OCI-LY7 (cell line): ENCODE measurements at regions of chr5 and their contacts with region 1.

Region 1: GRCh38 chr5:19584131-19584530 is 403.9 kb downstream of the CDH18 start:
- DNase-seq: no peak
- H3K4me3 ChIP-seq: no peak overlapping the region
- H3K27ac ChIP-seq: no peak overlapping the region
- H3K4me1 ChIP-seq: no peaks in the 10 kb centered on the region
- CTCF ChIP-seq: no peak

Region 2: DNA sequence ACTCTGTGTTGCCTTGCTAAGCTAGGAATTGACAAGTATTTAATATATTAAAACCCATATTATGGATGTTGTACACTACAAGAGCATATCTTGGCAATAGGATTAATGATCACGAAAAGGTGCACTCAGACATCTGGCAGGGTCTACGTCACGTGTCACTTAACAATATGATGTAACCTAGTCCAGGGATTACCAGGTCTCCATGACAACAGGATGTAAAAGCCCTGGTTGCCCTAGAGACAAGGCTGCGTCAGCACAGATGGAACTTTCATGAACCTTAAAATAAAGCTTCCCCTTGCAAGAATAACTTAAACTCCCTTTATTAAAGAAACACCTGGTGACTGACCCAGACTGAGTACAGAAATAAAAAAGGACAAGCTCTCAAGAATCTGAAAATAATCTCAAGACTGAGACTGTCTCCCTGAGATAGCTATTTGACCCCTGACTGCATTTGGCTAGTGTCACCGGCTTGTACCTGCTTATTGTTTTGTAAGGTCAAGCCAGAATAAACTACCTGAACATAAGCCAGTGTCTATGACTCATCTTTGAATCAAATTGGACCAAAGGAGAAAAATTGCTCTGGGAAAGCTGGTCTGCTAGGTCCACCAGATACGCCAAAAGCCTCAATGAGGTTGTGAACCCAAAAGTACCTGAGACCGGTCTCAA is 313.8 kb before region 1 on chr5:
- CTCF ChIA-PET with region 1: no interaction called
- POLR2A ChIA-PET with region 1: no interaction called
- intact Hi-C with region 1: loop called (anchors 10 kb)
- DNase-seq: peak; percentile 99
- H3K4me3 ChIP-seq: peak overlapping the region; percentile 34
- H3K27ac ChIP-seq: peak overlapping the region; percentile 100
- H3K4me1 ChIP-seq: peaks cover 81% of the 10 kb centered on the region
- CTCF ChIP-seq: no peak

Region 3: DNA sequence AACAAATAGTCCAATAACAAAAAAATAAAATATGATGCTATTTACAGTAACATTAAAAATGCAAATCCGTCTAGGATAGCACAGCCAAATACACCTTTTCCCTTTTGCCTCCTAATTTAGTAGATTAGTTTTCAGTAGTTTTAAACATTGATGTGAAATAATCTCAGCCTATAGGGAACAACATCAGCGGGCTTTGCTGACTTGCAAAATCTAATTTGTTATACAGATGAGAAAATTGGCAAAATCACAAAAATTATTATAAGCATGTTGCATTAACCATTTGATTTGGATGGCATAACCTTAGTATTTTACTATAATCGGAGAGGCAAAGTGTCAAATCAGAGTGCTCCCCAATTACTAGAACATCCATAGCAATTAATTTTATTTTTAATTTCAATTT is 159.6 kb before region 1 on chr5:
- CTCF ChIA-PET with region 1: no interaction called
- POLR2A ChIA-PET with region 1: no interaction called
- intact Hi-C with region 1: no loop called
- DNase-seq: no peak
- H3K4me3 ChIP-seq: no peak overlapping the region
- H3K27ac ChIP-seq: no peak overlapping the region
- H3K4me1 ChIP-seq: no peaks in the 10 kb centered on the region
- CTCF ChIP-seq: no peak